Heart left ventricle (tissue), 16 donors: ENCODE measurements at regions of chr3 and their contacts with region 1.

Region 1: DNA sequence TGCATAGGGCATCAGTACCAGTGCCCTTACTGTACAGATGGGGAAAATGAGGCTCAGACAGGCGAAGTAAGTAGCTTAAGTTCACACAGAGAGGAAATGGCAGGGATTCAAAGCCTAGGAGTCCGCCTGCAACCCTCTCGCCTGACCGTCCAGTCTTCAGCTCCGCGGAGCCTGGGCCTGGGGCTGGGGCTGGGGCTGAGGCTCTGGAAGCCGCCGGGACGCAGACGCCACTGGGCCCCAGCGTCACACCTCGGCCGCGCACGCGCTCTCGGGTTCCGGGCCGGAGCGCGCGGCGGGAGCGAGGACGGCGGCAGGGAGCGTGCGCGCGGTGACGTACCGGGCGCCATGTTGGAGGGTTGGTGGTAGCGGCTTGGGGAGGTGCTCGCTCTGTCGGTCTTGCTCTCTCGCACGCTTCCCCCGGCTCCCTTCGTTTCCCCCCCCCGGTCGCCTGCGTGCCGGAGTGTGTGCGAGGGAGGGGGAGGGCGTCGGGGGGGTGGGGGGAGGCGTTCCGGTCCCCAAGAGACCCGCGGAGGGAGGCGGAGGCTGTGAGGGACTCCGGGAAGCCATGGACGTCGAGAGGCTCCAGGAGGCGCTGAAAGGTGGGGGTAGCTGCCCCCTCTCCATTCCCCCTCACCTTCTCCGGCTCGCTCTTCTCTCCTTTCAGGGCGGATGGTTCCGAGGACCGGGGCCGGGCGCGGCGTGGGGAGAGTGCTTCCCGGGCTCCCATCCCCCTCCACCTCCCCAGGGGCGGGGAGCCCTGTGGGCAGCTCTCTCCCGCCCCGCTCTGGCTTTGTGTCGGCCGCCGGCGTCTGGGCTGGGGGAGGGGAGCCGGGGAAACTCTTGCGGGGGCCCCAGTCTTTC is at the start of gene PPP4R2:
- DNase-seq: peak; percentile 90 to 93 (median 92)
- ATAC-seq: peak; percentile 88 to 98 (median 96)
- H3K4me3 ChIP-seq: peak within 1 kb of the TSS; percentile 53 to 99 (median 89)
- H3K27ac ChIP-seq: peak within 1 kb of the TSS; percentile 91 to 99 (median 98)
- H3K4me1 ChIP-seq: peaks cover 0 to 49% (median 35%) of the 10 kb centered on the region in 12 donors
- H3K27me3 ChIP-seq: no peaks in the 10 kb centered on the region
- CTCF ChIP-seq: peak in 1 of 12 donors; percentile 26
- POLR2A ChIP-seq: peak in 1 of 2 donors; percentile 83
- total RNA-seq, gene PPP4R2: 41.2 to 69.7 (median 50.0) TPM

Region 2: GRCh38 chr3:72847751-72848702 is 148.7 kb before region 1 on chr3 and contains the start of gene SHQ1:
- intact Hi-C with region 1: loop called in 3 of 10 experiments (anchors 2 to 5 kb)
- DNase-seq: peak; percentile 96 to 98 (median 97)
- ATAC-seq: peak; percentile 98 to 99 (median 98)
- H3K4me3 ChIP-seq: peak within 1 kb of the TSS; percentile 30 to 95 (median 76)
- H3K27ac ChIP-seq: peak within 1 kb of the TSS; percentile 29 to 84 (median 74)
- H3K4me1 ChIP-seq: peaks cover 7 to 47% (median 20%) of the 10 kb centered on the region in 12 donors
- H3K27me3 ChIP-seq: no peaks in the 10 kb centered on the region
- CTCF ChIP-seq: no peak
- POLR2A ChIP-seq: peak in 1 of 2 donors; percentile 71
- total RNA-seq, gene SHQ1: 13.6 to 26.0 (median 19.9) TPM

Region 3: DNA sequence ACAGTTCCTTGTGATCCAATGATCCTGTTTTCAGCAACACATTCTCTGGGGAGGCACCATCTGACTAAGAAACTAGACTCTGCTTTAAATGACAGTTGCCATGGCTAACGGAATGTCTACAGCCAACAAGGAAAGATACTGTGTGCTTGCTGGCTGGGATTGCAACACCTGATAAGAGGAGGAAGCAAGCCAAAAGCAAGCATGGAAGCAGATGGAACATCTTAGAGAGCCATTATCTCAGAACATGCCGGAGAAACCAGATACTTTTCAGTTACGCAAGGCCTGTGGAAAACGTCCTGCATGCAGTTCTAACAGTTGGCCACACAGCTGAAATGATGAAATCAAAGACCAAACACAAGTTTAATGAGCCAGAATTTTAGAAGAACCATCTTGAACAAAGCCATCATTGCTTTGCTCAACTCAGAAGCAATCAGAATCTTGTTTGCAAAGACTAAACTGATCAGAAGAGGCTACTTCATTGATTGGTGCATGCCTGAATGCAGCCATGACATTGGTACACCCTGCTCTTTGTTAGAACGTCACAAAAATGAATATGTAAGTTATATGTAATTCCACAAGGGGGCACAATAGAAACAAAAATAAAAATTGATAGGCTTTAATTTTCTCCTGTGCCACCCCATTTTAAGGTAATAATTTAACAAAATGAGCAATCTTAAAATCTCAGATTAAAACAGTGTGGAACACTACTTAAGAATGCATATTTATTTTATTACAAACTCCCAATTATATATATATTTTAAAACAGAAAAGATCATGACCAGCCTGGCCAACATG is 58.0 kb before region 1 on chr3:
- intact Hi-C with region 1: loop called in 5 of 10 experiments (anchors 1 to 5 kb)
- DNase-seq: peak in 4 of 5 donors; percentile 54 to 79 (median 58)
- ATAC-seq: peak; percentile 85 to 96 (median 92)
- H3K4me3 ChIP-seq: peak overlapping the region in 1 of 12 donors; percentile 15
- H3K27ac ChIP-seq: peak overlapping the region in 11 of 12 donors; percentile 24 to 70 (median 49)
- H3K4me1 ChIP-seq: peaks cover 0 to 28% (median 7%) of the 10 kb centered on the region in 12 donors
- H3K27me3 ChIP-seq: no peaks in the 10 kb centered on the region
- CTCF ChIP-seq: peak in 11 of 12 donors; percentile 47 to 80 (median 62)
- POLR2A ChIP-seq: no peak

Region 4: GRCh38 chr3:72960812-72961518 is 35.7 kb before region 1 on chr3:
- intact Hi-C with region 1: loop called in 3 of 10 experiments (anchors 2 to 5 kb)
- DNase-seq: peak in 4 of 5 donors; percentile 62 to 80 (median 72)
- ATAC-seq: peak; percentile 83 to 92 (median 88)
- H3K4me3 ChIP-seq: no peak overlapping the region
- H3K27ac ChIP-seq: peak overlapping the region; percentile 60 to 92 (median 84)
- H3K4me1 ChIP-seq: peaks cover 0 to 53% (median 15%) of the 10 kb centered on the region in 12 donors
- H3K27me3 ChIP-seq: no peaks in the 10 kb centered on the region
- CTCF ChIP-seq: no peak
- POLR2A ChIP-seq: no peak

Region 5: DNA sequence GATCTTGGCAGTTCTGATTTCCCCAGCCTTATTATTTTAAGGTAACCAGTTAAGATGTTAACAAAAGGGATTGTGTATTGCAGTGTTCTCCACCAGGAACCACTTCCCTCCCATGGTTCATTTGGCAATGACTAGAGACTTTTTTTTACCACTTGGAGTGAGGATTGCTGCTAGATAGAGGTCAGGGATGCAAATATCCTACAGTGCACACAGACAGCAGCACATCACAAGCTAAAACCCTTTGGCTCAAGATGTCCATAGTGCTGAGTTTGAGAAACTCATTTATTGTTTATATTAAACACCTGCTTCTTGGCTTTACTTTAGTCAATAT is 40.6 kb after region 1 on chr3:
- intact Hi-C with region 1: loop called in 3 of 10 experiments (anchors 2 to 5 kb)
- DNase-seq: no peak
- ATAC-seq: peak in 3 of 4 donors; percentile 25 to 34 (median 31)
- H3K4me3 ChIP-seq: no peak overlapping the region
- H3K27ac ChIP-seq: no peak overlapping the region
- H3K4me1 ChIP-seq: peaks cover 7 to 88% (median 63%) of the 10 kb centered on the region in 12 donors
- H3K27me3 ChIP-seq: no peaks in the 10 kb centered on the region
- CTCF ChIP-seq: no peak
- POLR2A ChIP-seq: no peak

Region 6: DNA sequence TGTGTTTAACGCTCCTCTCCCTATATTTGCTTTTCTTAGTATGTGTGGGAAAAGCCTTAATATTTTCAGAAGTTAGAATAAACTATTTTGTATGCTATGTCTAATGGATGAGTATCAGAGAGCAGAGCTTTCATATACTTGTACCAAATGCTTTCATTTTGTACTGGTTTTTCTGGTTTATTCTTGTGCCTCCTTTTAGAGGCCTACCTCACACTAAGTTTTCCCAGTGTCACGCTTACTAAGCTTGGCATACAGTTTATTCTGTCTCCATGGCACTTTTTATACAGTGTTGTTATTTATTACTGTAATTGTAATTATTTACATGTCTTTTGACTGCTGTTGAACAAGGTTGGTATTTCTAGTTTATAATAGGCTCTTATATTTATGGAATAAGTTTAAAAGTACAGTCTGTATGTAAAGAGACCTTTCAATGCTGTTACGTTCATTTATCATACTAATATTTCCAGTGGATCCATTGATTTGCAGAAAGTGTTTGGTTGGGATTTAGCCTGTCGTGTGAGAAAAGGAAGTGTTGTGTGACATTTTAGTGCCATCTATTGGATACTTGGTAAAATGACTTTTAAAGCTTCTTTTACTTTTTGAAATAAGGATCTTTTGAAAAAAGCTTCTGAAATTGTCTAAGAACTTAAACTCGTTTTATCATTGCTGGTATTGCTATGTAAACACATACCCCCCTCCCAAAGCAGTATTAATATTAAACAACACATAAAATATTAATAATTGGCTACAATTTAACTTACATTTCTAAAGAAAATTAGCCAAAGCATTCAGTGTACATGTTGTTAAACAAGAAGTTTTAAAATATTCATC is 59.5 kb after region 1 on chr3:
- intact Hi-C with region 1: loop called in 9 of 10 experiments (anchors 2 to 10 kb)
- DNase-seq: no peak
- ATAC-seq: peak in 2 of 4 donors; percentile 51 to 58
- H3K4me3 ChIP-seq: no peak overlapping the region
- H3K27ac ChIP-seq: peak overlapping the region in 4 of 12 donors; percentile 21 to 61 (median 30)
- H3K4me1 ChIP-seq: peaks cover 0 to 41% (median 11%) of the 10 kb centered on the region in 12 donors
- H3K27me3 ChIP-seq: no peaks in the 10 kb centered on the region
- CTCF ChIP-seq: peak; percentile 30 to 69 (median 58)
- POLR2A ChIP-seq: no peak